Motor neuron (in vitro differentiated cells): ENCODE measurements at regions of chr3 and their contacts with region 1.

Region 1: GRCh38 chr3:78659386-78659987 is 1108.3 kb downstream of the ROBO1 start:
- ATAC-seq: no peak
- H3K4me3 ChIP-seq: no peak overlapping the region
- H3K27ac ChIP-seq: no peak overlapping the region
- H3K4me1 ChIP-seq: no peaks in the 10 kb centered on the region

Region 2: GRCh38 chr3:78988324-78988723 is 328.8 kb after region 1 on chr3:
- in situ Hi-C with region 1: loop called in 3 of 9 experiments (anchors 25 kb)
- ATAC-seq: peak in 3 of 8 experiments; percentile 34 to 43 (median 36)
- H3K4me3 ChIP-seq: no peak overlapping the region
- H3K27ac ChIP-seq: no peak overlapping the region
- H3K4me1 ChIP-seq: peaks cover 4 to 8% of the 10 kb centered on the region in 2 donors

Region 3: DNA sequence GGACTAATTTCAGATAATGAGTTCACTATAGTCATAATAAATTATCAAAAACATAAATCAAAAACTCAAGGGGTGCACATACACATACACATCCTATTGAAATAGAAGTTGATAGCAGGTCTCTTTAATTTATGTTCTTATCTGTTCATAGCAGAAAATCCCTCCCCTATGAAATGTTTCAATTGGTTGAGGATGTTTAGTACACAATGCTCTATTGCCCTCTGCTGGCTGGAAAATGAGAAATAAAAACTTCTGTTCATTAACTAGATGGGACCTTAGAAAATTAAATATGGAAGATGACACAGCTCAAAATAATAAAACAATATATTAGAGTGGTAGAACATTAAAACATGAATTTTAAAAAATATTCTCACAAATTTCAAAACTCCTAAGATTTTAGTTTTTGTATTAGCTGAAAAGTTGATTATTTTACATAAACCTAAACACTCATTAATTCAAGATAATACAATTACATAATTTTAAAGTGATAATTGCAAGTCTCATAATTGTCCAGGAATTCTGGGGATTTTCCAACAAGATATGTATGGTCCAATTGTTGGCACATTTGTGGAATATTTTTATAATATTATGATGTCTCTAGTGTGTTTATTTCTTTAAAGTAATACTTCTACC is 373.3 kb after region 1 on chr3:
- in situ Hi-C with region 1: loop called in 4 of 9 experiments (anchors 10 to 25 kb)
- ATAC-seq: peak in 4 of 8 experiments; percentile 14 to 63 (median 48)
- H3K4me3 ChIP-seq: no peak overlapping the region
- H3K27ac ChIP-seq: no peak overlapping the region
- H3K4me1 ChIP-seq: no peaks in the 10 kb centered on the region

Region 4: GRCh38 chr3:79497447-79498111 is 838.1 kb after region 1 on chr3:
- in situ Hi-C with region 1: loop called in 2 of 9 experiments (anchors 25 kb)
- ATAC-seq: no peak
- H3K4me3 ChIP-seq: no peak overlapping the region
- H3K27ac ChIP-seq: no peak overlapping the region
- H3K4me1 ChIP-seq: no peaks in the 10 kb centered on the region